B cell (primary cell): ENCODE measurements at regions of chr11 and their contacts with region 1.

Region 1: GRCh38 chr11:65382033-65382807 is at the start of gene SLC25A45:
- DNase-seq: peak; percentile 93
- ATAC-seq: peak; percentile 83
- H3K4me3 ChIP-seq: peak within 1 kb of the TSS; percentile 44 to 81 (median 61)
- H3K4me3 Mint-ChIP-seq: peak within 1 kb of the TSS; percentile 92
- H3K27ac ChIP-seq: peak within 1 kb of the TSS; percentile 91
- H3K27ac Mint-ChIP-seq: peak within 1 kb of the TSS; percentile 98
- H3K4me1 ChIP-seq: peaks cover 35 to 71% of the 10 kb centered on the region in 2 donors
- H3K4me1 Mint-ChIP-seq: peaks cover 63% of the 10 kb centered on the region
- H3K27me3 ChIP-seq: no peaks in the 10 kb centered on the region
- H3K27me3 Mint-ChIP-seq: no peaks in the 10 kb centered on the region
- CTCF ChIP-seq: peak; percentile 85
- total RNA-seq, gene SLC25A45: 16.4 and 18.2 TPM in 2 replicates

Region 2: DNA sequence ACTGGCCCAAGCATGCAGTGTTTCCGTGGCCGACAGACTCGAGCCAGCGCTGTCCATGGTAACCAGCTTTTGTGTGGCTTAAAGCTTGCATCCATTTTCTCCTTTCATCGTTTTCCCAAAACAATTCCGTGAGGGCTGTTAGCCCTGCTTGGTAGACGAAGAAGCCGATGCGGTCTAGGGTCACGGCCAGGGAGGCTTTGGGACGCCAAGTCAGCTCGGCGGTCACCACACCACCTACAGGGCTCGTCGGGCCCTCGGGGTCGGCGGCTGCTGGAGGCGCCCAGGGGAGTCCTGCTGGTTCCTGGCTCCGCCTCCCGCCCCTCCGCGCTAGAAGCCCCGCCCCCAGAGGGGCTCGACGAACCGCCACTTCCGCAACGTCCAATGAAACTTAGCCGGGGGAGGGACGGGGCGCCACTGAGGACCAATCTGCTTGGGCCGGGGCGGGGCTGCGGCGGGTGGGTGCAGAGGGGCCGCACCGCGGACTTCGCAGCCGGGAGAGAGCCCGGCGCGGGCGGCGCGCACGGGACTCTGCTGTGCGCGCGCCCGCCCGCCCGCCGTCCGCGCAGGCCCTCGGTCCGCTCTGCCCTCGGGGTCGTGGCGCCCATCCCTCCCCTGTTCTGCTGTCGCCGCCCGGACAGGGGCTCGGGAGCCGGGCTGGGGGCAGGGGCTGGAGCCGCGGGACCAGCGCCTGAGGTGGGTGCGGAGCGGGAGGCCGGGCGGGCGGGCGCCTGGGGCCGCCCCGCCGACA is 27.8 kb before region 1 on chr11 and contains the start of gene TIGD3:
- CTCF ChIA-PET with region 1: interaction called, 4 read pairs
- POLR2A ChIA-PET with region 1: interaction called, 8 read pairs
- intact Hi-C with region 1: loop called (anchors 1 kb)
- DNase-seq: peak; percentile 97
- ATAC-seq: peak; percentile 96
- H3K4me3 ChIP-seq: peak within 1 kb of the TSS; percentile 26 to 79 (median 65)
- H3K4me3 Mint-ChIP-seq: peak within 1 kb of the TSS; percentile 95
- H3K27ac ChIP-seq: peak within 1 kb of the TSS in 1 of 2 donors; percentile 18
- H3K27ac Mint-ChIP-seq: peak within 1 kb of the TSS; percentile 92
- H3K4me1 ChIP-seq: peaks cover 11 to 16% of the 10 kb centered on the region in 2 donors
- H3K4me1 Mint-ChIP-seq: peaks cover 20% of the 10 kb centered on the region
- H3K27me3 ChIP-seq: no peaks in the 10 kb centered on the region
- H3K27me3 Mint-ChIP-seq: no peaks in the 10 kb centered on the region
- CTCF ChIP-seq: no peak
- total RNA-seq, gene TIGD3: 6.1 and 7.5 TPM in 2 replicates

Region 3: GRCh38 chr11:65403607-65404121 is 21.4 kb after region 1 on chr11:
- CTCF ChIA-PET with region 1: interaction called, 10 read pairs
- POLR2A ChIA-PET with region 1: interaction called, 32 read pairs
- intact Hi-C with region 1: loop called (anchors 1 kb)
- DNase-seq: peak; percentile 91
- ATAC-seq: peak; percentile 68
- H3K4me3 ChIP-seq: peak overlapping the region in 2 of 5 experiments; percentile 10 to 22
- H3K4me3 Mint-ChIP-seq: peak overlapping the region; percentile 71
- H3K27ac ChIP-seq: peak overlapping the region; percentile 81 to 86
- H3K27ac Mint-ChIP-seq: peak overlapping the region; percentile 96
- H3K4me1 ChIP-seq: peaks cover 34 to 57% of the 10 kb centered on the region in 2 donors
- H3K4me1 Mint-ChIP-seq: peaks cover 40% of the 10 kb centered on the region
- H3K27me3 ChIP-seq: no peaks in the 10 kb centered on the region
- H3K27me3 Mint-ChIP-seq: no peaks in the 10 kb centered on the region
- CTCF ChIP-seq: no peak

Region 4: GRCh38 chr11:65425105-65425970 is 43.1 kb after region 1 on chr11:
- CTCF ChIA-PET with region 1: interaction called, 108 read pairs
- POLR2A ChIA-PET with region 1: interaction called, 107 read pairs
- intact Hi-C with region 1: loop called (anchors 1 kb)
- DNase-seq: peak; percentile 94
- ATAC-seq: peak; percentile 36
- H3K4me3 ChIP-seq: peak overlapping the region; percentile 63 to 98 (median 75)
- H3K4me3 Mint-ChIP-seq: peak overlapping the region; percentile 92
- H3K27ac ChIP-seq: peak overlapping the region; percentile 91 to 97
- H3K27ac Mint-ChIP-seq: peak overlapping the region; percentile 100
- H3K4me1 ChIP-seq: peaks cover 79 to 88% of the 10 kb centered on the region in 2 donors
- H3K4me1 Mint-ChIP-seq: peaks cover 75% of the 10 kb centered on the region
- H3K27me3 ChIP-seq: no peaks in the 10 kb centered on the region
- H3K27me3 Mint-ChIP-seq: no peaks in the 10 kb centered on the region
- CTCF ChIP-seq: peak; percentile 37

Region 5: GRCh38 chr11:65432686-65433582 is 50.7 kb after region 1 on chr11:
- CTCF ChIA-PET with region 1: interaction called, 7 read pairs
- POLR2A ChIA-PET with region 1: interaction called, 11 read pairs
- intact Hi-C with region 1: loop called (anchors 1 kb)
- DNase-seq: peak; percentile 75
- ATAC-seq: peak; percentile 20
- H3K4me3 ChIP-seq: no peak overlapping the region
- H3K4me3 Mint-ChIP-seq: peak overlapping the region; percentile 32
- H3K27ac ChIP-seq: no peak overlapping the region
- H3K27ac Mint-ChIP-seq: peak overlapping the region; percentile 47
- H3K4me1 ChIP-seq: peaks cover 48 to 53% of the 10 kb centered on the region in 2 donors
- H3K4me1 Mint-ChIP-seq: peaks cover 61% of the 10 kb centered on the region
- H3K27me3 ChIP-seq: no peaks in the 10 kb centered on the region
- H3K27me3 Mint-ChIP-seq: no peaks in the 10 kb centered on the region
- CTCF ChIP-seq: peak; percentile 62

Region 6: GRCh38 chr11:65471410-65471762 is 89.2 kb after region 1 on chr11:
- CTCF ChIA-PET with region 1: interaction called, 6 read pairs
- POLR2A ChIA-PET with region 1: interaction called, 14 read pairs
- intact Hi-C with region 1: loop called (anchors 1 kb)
- DNase-seq: peak; percentile 47
- ATAC-seq: no peak
- H3K4me3 ChIP-seq: peak overlapping the region in 1 of 5 experiments; percentile 26
- H3K4me3 Mint-ChIP-seq: peak overlapping the region; percentile 19
- H3K27ac ChIP-seq: peak overlapping the region; percentile 56 to 77
- H3K27ac Mint-ChIP-seq: peak overlapping the region; percentile 97
- H3K4me1 ChIP-seq: peaks cover 16 to 30% of the 10 kb centered on the region in 2 donors
- H3K4me1 Mint-ChIP-seq: peaks cover 27% of the 10 kb centered on the region
- H3K27me3 ChIP-seq: no peaks in the 10 kb centered on the region
- H3K27me3 Mint-ChIP-seq: no peaks in the 10 kb centered on the region
- CTCF ChIP-seq: no peak

Region 7: DNA sequence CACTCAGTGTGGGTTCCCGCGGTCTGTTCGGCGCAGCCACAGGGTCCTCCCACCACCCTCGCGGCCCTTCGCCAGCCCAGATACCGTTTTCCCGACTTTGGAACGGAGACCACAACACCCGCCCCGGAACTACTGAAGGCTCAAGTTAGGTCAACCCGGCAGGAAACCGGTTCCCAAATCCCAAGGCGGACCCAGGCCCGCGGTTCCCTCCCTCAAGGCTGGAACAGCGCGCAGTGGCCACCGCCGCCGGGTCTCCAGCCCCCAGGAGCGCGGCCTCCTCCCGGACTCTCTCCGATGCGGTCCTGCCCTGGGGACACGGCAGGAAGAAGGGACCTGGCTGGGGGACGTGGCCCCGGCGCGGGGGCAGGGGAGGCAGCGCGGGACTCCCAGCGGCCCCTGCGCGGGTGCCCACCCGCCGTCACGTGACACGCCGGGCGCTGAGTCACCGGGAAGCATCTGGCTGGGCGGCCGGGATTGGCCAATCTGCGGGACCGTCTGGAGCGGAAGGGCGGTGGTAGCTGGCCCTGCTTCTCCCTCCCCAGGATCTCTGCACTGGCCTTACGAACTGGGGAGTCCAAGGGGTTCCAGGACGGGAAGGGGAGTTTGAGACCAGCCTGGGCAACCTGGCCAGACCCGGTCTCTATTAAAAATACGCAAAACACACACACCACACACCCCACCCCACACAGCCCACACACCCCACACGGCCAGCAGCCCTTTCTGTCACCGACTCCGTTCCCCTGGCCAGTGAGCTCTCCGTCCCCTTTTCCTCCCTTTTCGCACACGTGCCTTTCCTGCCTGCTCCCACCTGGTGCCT is 95.1 kb after region 1 on chr11:
- CTCF ChIA-PET with region 1: interaction called, 6 read pairs
- POLR2A ChIA-PET with region 1: interaction called, 6 read pairs
- intact Hi-C with region 1: loop called (anchors 1 kb)
- DNase-seq: peak; percentile 90
- ATAC-seq: peak; percentile 87
- H3K4me3 ChIP-seq: peak overlapping the region; percentile 61 to 93 (median 83)
- H3K4me3 Mint-ChIP-seq: peak overlapping the region; percentile 96
- H3K27ac ChIP-seq: peak overlapping the region; percentile 88 to 92
- H3K27ac Mint-ChIP-seq: peak overlapping the region; percentile 99
- H3K4me1 ChIP-seq: peaks cover 11 to 32% of the 10 kb centered on the region in 2 donors
- H3K4me1 Mint-ChIP-seq: peaks cover 14% of the 10 kb centered on the region
- H3K27me3 ChIP-seq: no peaks in the 10 kb centered on the region
- H3K27me3 Mint-ChIP-seq: no peaks in the 10 kb centered on the region
- CTCF ChIP-seq: no peak